Body of pancreas (tissue), 4 donors: ENCODE measurements at regions of chr11 and their contacts with region 1.

Region 1: DNA sequence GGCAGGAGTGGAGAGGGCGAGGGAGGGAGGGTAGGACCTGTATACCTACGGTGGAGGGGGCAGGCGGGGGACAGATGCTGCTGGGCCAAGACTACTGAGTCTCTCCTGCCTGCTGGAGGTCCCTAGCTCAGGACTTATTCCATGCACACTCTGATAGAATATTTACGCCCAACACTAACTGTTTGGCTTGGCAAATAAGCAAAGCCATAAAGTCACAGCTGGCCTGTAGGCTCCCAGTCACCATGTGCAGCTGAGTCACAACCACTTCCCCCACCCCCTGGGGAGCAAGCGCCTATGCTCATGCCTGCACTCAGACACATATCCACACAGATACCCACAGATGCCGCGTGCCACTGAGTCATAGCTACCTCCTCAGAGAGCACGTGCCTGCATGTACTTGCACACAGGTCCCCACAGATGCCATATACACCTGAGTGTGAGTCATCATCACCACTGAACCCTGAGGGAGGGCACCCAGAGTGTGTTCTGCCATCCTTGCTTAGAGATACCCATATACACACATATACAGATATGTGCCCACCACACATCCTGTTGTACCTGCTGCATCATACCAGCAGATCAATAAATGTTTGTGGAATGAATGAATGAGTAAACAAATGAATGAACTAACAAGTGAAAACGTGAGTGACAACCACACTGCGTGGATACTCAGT is 95.8 kb downstream of the SWAP70 start:
- DNase-seq: peak; percentile 59 to 93 (median 76)
- ATAC-seq: peak; percentile 34
- H3K4me3 ChIP-seq: no peak overlapping the region
- H3K27ac ChIP-seq: peak overlapping the region; percentile 75 to 90 (median 81)
- H3K4me1 ChIP-seq: peaks cover 24% of the 10 kb centered on the region
- H3K27me3 ChIP-seq: no peaks in the 10 kb centered on the region
- CTCF ChIP-seq: no peak
- POLR2A ChIP-seq: no peak

Region 2: DNA sequence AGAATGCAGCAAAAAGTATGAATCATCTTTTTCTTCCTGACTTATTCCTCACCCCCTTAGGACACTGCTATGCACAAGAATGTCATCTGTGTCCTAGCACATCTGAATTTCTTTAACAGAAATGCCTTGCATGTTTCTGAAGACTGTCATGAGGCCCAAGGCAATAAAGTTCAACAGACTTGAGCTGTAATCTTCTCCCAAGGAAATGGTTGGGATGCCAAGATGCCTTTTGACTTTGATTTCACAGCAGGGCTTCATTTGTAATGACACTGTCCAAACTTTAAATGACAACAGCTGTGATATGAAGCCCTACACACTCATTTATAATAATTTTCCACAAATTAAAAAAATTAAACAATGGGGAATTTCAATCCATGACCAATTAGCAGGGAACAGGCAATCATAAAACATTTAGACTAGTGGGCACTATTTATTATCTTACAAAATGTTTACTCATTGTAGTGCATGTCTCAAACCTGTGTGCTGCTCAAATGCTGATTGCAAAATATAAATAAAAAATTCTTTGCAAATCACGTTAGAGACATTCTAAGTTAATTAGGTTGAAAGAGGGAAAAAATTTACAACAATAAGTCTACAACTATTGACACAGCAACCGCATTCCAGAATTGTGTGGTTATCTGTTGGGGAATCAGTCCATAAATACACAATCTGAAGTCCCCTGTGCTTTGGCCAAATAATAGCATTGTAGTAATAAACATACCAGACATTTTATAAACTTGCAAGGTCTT is 146.6 kb after region 1 on chr11:
- intact Hi-C with region 1: no loop called
- DNase-seq: no peak
- ATAC-seq: no peak
- H3K4me3 ChIP-seq: no peak overlapping the region
- H3K27ac ChIP-seq: no peak overlapping the region
- H3K4me1 ChIP-seq: no peaks in the 10 kb centered on the region
- H3K27me3 ChIP-seq: no peaks in the 10 kb centered on the region
- CTCF ChIP-seq: no peak
- POLR2A ChIP-seq: no peak

Region 3: DNA sequence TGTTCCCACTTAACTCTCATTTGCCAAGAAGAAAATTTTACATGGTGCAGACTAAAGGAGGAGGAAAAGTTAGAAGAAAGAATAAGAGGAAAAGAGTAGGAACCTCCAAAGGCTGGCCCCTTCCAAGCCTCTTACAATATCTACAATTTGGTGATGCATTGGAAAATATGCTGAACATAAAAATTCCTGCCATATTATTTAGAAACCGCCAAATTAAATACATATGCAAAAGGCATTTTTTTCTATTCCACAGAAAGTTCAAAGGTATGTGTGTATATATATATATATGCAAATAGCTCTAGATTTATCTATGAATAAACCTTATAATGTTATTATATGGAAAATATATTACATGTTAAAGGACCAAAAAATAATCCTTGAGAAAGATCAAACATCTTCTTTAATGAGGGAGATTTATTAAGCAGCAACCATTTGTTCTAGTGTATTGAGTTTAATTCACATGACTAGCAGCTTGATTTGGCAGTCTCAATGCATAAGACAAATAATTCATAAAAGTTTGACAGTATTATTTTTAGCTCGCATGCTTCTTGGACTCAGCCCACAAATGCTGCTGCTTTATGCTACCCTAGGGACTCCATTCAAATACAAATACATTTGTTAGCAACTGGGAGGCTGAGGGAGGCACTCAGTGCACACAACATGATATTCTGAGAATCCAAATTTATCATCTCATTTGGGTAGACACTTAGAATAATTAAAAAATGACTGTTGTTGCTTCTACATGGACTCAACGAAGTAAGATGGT is 349.4 kb after region 1 on chr11:
- intact Hi-C with region 1: no loop called
- DNase-seq: no peak
- ATAC-seq: no peak
- H3K4me3 ChIP-seq: no peak overlapping the region
- H3K27ac ChIP-seq: peak overlapping the region in 1 of 4 donors; percentile 5
- H3K4me1 ChIP-seq: no peaks in the 10 kb centered on the region
- H3K27me3 ChIP-seq: no peaks in the 10 kb centered on the region
- CTCF ChIP-seq: no peak
- POLR2A ChIP-seq: no peak

Region 4: DNA sequence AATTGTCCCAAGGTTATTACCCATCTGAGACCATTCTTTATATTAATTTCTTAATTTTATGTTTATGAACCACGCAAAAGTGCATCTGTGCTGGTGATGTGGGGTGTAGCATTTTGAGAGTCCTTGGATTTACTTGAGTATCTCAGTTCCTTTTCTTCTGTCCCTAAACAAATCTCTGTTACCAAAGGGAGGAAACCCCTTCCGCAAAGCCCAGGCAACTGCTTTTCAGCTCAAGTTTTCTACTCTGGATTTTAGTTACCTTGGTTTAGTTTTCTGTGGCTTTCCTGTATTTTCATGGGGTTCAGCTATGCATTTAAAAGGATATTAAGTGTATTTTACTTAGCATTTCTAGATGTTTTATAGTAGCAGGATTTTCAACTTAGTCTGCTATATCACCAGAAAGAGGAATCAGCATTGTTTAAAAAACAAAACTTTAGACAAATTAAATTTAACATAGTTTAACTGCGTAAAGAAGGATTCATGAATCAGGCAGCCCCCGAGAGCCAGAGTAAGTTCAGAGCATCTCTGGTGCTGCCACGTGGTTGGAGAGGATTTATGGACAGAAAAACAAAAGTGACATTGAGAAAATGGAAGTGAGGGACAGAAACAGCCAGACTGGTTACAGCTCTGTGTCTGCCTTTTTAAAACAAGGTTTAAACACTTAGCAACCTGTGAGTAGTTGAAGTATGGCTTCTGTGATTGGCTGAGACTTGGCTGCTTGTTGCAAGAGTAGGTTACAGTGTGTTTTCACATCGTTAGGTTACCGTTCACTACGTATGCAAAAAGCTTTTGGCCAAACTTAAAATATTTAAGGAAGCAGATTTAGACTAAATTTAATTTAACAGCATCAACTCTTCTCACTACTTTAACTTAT is 554.8 kb after region 1 on chr11:
- intact Hi-C with region 1: loop called (anchors 10 kb)
- DNase-seq: peak in 1 of 4 donors; percentile 61
- ATAC-seq: peak; percentile 72
- H3K4me3 ChIP-seq: no peak overlapping the region
- H3K27ac ChIP-seq: no peak overlapping the region
- H3K4me1 ChIP-seq: peaks cover 9% of the 10 kb centered on the region
- H3K27me3 ChIP-seq: no peaks in the 10 kb centered on the region
- CTCF ChIP-seq: no peak
- POLR2A ChIP-seq: no peak